ENCODE measurements at regions of chr17 and their contacts with region 1.

Region 1: GRCh38 chr17:80364216-80364618 is 50.8 kb upstream of the ENDOV start:
- DNase-seq: peak; percentile 48 to 55
- H3K4me3 ChIP-seq: no peak overlapping the region
- H3K4me3 Mint-ChIP-seq: no peak overlapping the region
- H3K27ac Mint-ChIP-seq: no peak overlapping the region
- H3K4me1 ChIP-seq: no peaks in the 10 kb centered on the region
- H3K4me1 Mint-ChIP-seq: no peaks in the 10 kb centered on the region
- H3K27me3 ChIP-seq: no peaks in the 10 kb centered on the region
- H3K27me3 Mint-ChIP-seq: no peaks in the 10 kb centered on the region
- CTCF ChIP-seq: peak; percentile 55 to 63

Region 2: DNA sequence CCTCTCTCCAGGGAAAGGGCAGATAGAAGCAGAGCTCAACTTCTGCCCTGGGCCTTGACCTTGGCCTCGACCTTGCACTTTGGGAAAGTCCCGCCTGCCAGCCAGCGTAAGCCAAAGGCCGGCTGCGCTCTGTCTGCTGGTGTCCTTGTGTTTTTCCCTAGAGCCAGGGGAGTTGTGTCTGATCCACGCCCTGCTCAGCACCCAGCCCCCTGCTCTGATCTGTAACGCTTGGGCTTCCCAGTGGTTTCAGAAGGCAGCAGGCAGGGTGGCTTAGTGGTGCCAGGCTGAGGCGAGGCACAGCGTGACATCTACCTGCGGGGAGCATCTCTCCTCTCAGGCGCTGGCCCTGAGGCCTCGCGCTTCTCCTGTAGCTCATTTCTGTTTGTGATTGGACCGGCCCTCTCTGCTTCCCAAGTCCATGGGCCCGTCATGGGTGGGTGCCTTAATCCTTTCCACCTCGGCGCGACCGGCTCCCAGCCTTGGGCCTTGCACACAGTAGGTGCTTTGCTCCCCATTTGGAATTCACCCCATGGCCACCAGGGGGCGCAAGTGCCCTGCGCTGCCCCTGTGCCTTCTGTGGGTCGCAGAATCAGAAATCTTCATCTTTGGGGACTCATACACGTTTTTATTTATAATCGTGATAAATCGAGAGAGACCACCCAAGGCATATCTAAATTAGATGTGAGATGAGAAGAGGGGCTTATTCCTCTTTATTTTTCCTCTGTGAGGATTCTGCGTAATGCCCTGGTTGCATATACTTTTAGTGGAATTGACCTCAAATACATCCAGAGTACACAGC is 168.3 kb before region 1 on chr17:
- CTCF ChIA-PET with region 1: no interaction called
- POLR2A ChIA-PET with region 1: no interaction called
- intact Hi-C with region 1: loop called (anchors 5 kb)
- DNase-seq: peak in 1 of 2 experiments; percentile 52
- H3K4me3 ChIP-seq: no peak overlapping the region
- H3K4me3 Mint-ChIP-seq: no peak overlapping the region
- H3K27ac Mint-ChIP-seq: no peak overlapping the region
- H3K4me1 ChIP-seq: no peaks in the 10 kb centered on the region
- H3K4me1 Mint-ChIP-seq: no peaks in the 10 kb centered on the region
- H3K27me3 ChIP-seq: no peaks in the 10 kb centered on the region
- H3K27me3 Mint-ChIP-seq: no peaks in the 10 kb centered on the region
- CTCF ChIP-seq: peak; percentile 77 to 98

Region 3: GRCh38 chr17:80414803-80415625 is 50.8 kb after region 1 on chr17 and contains the start of gene ENDOV:
- CTCF ChIA-PET with region 1: no interaction called
- POLR2A ChIA-PET with region 1: no interaction called
- intact Hi-C with region 1: no loop called
- DNase-seq: peak; percentile 91 to 93
- H3K4me3 ChIP-seq: peak within 1 kb of the TSS; percentile 85
- H3K4me3 Mint-ChIP-seq: peak within 1 kb of the TSS; percentile 74
- H3K27ac Mint-ChIP-seq: peak within 1 kb of the TSS; percentile 90
- H3K4me1 ChIP-seq: peaks cover 6% of the 10 kb centered on the region; the same call in 1 of the 2 replicates
- H3K4me1 Mint-ChIP-seq: peaks cover 13% of the 10 kb centered on the region
- H3K27me3 ChIP-seq: no peaks in the 10 kb centered on the region
- H3K27me3 Mint-ChIP-seq: peaks cover 9% of the 10 kb centered on the region
- CTCF ChIP-seq: no peak
- total RNA-seq, gene ENDOV: 20.5 and 21.5 TPM in 2 replicates